Activated CD8-positive, alpha-beta T cell treated with anti-CD3 and anti-CD28 coated beads, Interleukin-2, amount 10 ng/mL, durations not matched to agents 7 days and 5 days (primary cell): ENCODE measurements at regions of chr17 and their contacts with region 1.

Region 1: GRCh38 chr17:78421484-78422266 is 43.2 kb downstream of the PGS1 start:
- DNase-seq: peak; percentile 79
- ATAC-seq: peak; percentile 82
- H3K4me3 Mint-ChIP-seq: no peak overlapping the region
- H3K27ac Mint-ChIP-seq: peak overlapping the region; percentile 39
- H3K4me1 Mint-ChIP-seq: peaks cover 23% of the 10 kb centered on the region
- H3K27me3 Mint-ChIP-seq: no peaks in the 10 kb centered on the region

Region 2: DNA sequence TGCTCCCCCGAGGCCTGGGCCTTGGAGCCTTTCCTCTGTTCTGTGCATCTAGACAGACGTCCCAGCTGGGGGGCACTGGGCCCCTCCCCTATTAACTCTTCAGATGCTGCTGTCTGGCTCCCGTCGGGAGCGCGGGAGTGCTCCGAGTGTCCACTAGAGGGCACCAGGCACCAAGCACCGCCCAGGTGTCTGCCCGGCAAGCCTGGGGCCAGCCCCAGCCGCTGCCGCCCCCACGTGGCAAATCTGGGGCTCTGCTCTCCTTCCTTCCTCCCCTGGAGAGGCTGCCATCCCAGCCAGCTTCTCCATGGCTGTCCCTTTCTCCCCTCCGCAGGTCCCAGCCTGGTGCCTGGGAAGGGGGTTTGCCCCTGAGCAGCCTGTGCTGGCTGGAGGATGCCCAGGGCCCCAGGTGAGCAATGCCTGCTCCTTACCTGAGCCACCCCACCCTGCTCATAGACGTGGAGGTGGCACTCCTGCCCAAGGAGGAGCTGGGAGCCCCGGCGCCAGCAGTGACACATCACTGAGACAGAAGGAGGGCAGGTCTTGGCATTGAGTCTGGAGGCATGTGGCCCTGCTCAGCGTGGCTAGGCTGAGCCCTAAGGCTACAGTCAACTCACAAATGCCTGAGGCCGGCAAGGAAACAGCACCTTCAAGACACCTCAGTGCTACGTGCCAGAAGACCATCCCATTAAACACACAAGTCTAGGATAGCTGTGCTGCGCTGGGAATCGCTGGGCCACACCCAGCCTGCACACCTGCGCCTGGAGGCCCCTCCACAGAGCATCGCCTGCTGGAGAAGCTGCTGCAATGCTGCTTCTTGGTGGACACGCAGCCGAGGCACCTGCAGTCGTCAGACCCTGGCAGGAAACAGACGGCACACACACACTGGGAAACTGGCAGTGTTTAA is 170.5 kb before region 1 on chr17:
- CTCF ChIA-PET with region 1: interaction called, 54 read pairs
- POLR2A ChIA-PET with region 1: no interaction called
- DNase-seq: peak; percentile 89
- ATAC-seq: peak; percentile 70
- H3K4me3 Mint-ChIP-seq: peak overlapping the region; percentile 64
- H3K27ac Mint-ChIP-seq: peak overlapping the region; percentile 72
- H3K4me1 Mint-ChIP-seq: peaks cover 32% of the 10 kb centered on the region
- H3K27me3 Mint-ChIP-seq: peaks cover 13% of the 10 kb centered on the region

Region 3: GRCh38 chr17:78289802-78290363 is 131.8 kb before region 1 on chr17:
- CTCF ChIA-PET with region 1: interaction called, 34 read pairs
- POLR2A ChIA-PET with region 1: no interaction called
- DNase-seq: peak; percentile 82
- ATAC-seq: peak; percentile 99
- H3K4me3 Mint-ChIP-seq: no peak overlapping the region
- H3K27ac Mint-ChIP-seq: no peak overlapping the region
- H3K4me1 Mint-ChIP-seq: no peaks in the 10 kb centered on the region
- H3K27me3 Mint-ChIP-seq: no peaks in the 10 kb centered on the region

Region 4: GRCh38 chr17:78378225-78379130 is 43.2 kb before region 1 on chr17 and contains the start of gene PGS1:
- CTCF ChIA-PET with region 1: interaction called, 22 read pairs
- POLR2A ChIA-PET with region 1: interaction called, 3 read pairs
- DNase-seq: peak; percentile 88
- ATAC-seq: peak; percentile 71
- H3K4me3 Mint-ChIP-seq: peak within 1 kb of the TSS; percentile 88
- H3K27ac Mint-ChIP-seq: peak within 1 kb of the TSS; percentile 90
- H3K4me1 Mint-ChIP-seq: peaks cover 43% of the 10 kb centered on the region
- H3K27me3 Mint-ChIP-seq: peaks cover 6% of the 10 kb centered on the region
- total RNA-seq, gene PGS1: 46.5 to 51.0 TPM

Region 5: DNA sequence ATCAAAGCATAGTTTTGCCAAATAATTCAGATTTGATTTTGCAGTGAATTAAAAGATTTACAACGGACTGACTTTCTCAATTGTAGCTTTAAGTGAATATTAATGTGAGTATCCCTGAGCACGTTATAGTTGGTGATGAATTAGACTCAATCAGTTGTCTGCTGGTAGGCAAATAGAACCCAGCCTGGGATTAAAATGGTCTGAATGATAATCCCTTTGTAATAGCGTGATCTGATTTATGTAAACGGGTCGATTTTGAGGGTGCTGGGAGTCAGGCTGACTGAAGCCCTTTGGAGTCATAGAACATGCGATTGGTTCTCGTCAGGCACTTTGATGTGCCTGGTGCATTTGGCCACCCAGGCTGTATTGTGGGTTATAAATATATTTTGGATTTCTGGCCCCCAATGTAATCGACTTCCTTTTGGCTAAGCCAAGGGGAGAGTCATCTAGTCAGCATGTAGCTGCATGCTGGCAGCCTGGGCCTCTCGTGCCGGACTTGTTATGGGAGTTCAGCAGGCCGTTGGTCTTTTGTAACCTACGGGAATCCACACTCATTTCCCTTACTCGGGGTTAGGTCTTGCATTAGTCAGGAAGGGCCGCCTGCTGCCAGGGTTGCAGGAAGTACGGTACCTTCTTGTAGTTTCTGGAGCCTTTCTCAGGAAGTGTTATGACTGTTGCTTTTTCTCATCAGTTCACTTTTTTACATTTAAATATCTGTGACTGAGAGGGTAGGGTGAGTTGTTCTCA is 37.8 kb before region 1 on chr17:
- CTCF ChIA-PET with region 1: interaction called, 22 read pairs
- POLR2A ChIA-PET with region 1: interaction called, 3 read pairs
- DNase-seq: peak; percentile 52
- ATAC-seq: peak; percentile 13
- H3K4me3 Mint-ChIP-seq: peak overlapping the region; percentile 63
- H3K27ac Mint-ChIP-seq: peak overlapping the region; percentile 88
- H3K4me1 Mint-ChIP-seq: peaks cover 88% of the 10 kb centered on the region
- H3K27me3 Mint-ChIP-seq: no peaks in the 10 kb centered on the region

Region 6: DNA sequence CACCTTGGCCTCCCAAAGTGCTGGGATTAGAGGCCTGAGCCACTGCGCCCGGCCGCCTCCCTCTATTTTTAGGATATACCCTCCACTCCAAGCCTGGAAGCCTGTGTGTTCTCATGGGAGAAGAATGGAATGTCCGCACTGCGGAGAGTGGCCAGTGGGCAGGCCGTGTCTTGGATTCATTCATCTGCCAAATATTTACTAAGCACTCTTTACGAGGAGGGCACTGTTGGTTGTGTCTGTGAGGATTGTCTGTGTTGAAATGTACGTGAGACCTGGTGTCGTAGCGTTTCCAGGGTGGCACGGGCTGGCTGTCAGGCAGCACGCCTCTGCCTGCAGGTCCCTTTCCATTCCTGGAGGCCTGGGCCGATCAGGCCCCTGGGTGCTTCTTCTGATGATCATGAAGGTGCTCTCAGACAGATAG is 24.0 kb before region 1 on chr17:
- CTCF ChIA-PET with region 1: interaction called, 11 read pairs
- POLR2A ChIA-PET with region 1: interaction called, 3 read pairs
- DNase-seq: no peak
- ATAC-seq: no peak
- H3K4me3 Mint-ChIP-seq: no peak overlapping the region
- H3K27ac Mint-ChIP-seq: no peak overlapping the region
- H3K4me1 Mint-ChIP-seq: no peaks in the 10 kb centered on the region
- H3K27me3 Mint-ChIP-seq: no peaks in the 10 kb centered on the region